Naive thymus-derived CD4-positive, alpha-beta T cell (primary cell): ENCODE measurements at regions of chr6 and their contacts with region 1.

Region 1: GRCh38 chr6:156410649-156411048 is 366.5 kb upstream of the ARID1B start:
- DNase-seq: no peak
- ATAC-seq: no peak
- H3K4me3 ChIP-seq: no peak overlapping the region
- H3K4me3 Mint-ChIP-seq: no peak overlapping the region
- H3K27ac ChIP-seq: no peak overlapping the region
- H3K27ac Mint-ChIP-seq: no peak overlapping the region
- H3K4me1 ChIP-seq: no peaks in the 10 kb centered on the region
- H3K4me1 Mint-ChIP-seq: peaks cover 0 to 2% (median 0%) of the 10 kb centered on the region in 7 donors
- H3K27me3 ChIP-seq: no peaks in the 10 kb centered on the region
- H3K27me3 Mint-ChIP-seq: no peaks in the 10 kb centered on the region

Region 2: DNA sequence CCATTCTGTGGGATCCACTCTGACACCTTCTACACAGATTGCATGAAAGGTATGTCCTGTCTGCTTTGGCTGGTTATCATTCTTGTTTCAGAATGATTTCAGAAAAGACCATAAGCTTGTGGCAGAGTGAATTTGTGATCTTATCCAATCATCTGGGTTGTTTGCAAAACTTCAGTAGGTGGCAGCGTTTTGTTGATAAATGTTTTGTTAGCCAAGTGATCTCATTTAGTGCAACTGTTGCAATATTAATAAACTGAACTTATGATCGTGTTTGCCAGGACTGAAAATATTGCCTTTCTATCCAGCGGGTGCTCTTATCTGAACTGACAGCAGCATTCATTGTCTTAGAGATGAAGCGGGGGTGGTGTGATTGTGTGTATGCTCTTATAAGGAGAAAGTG is 341.8 kb before region 1 on chr6:
- CTCF ChIA-PET with region 1: no interaction called
- POLR2A ChIA-PET with region 1: no interaction called
- intact Hi-C with region 1: loop called in 1 of 2 experiments (anchors 5 kb)
- DNase-seq: peak in 1 of 9 donors; percentile 9
- ATAC-seq: no peak
- H3K4me3 ChIP-seq: no peak overlapping the region
- H3K4me3 Mint-ChIP-seq: no peak overlapping the region
- H3K27ac ChIP-seq: no peak overlapping the region
- H3K27ac Mint-ChIP-seq: peak overlapping the region in 2 of 9 donors; percentile 4 to 5
- H3K4me1 ChIP-seq: no peaks in the 10 kb centered on the region
- H3K4me1 Mint-ChIP-seq: peaks cover 0 to 5% (median 2%) of the 10 kb centered on the region in 7 donors
- H3K27me3 ChIP-seq: no peaks in the 10 kb centered on the region
- H3K27me3 Mint-ChIP-seq: no peaks in the 10 kb centered on the region

Region 3: GRCh38 chr6:156219973-156220372 is 190.7 kb before region 1 on chr6:
- CTCF ChIA-PET with region 1: no interaction called
- POLR2A ChIA-PET with region 1: no interaction called
- intact Hi-C with region 1: no loop called
- DNase-seq: no peak
- ATAC-seq: no peak
- H3K4me3 ChIP-seq: no peak overlapping the region
- H3K4me3 Mint-ChIP-seq: no peak overlapping the region
- H3K27ac ChIP-seq: no peak overlapping the region
- H3K27ac Mint-ChIP-seq: no peak overlapping the region
- H3K4me1 ChIP-seq: no peaks in the 10 kb centered on the region
- H3K4me1 Mint-ChIP-seq: peaks cover 0 to 13% (median 0%) of the 10 kb centered on the region in 7 donors
- H3K27me3 ChIP-seq: no peaks in the 10 kb centered on the region
- H3K27me3 Mint-ChIP-seq: peaks cover 0 to 10% (median 0%) of the 10 kb centered on the region in 5 donors

Region 4: GRCh38 chr6:156250593-156250992 is 160.1 kb before region 1 on chr6:
- CTCF ChIA-PET with region 1: no interaction called
- POLR2A ChIA-PET with region 1: no interaction called
- intact Hi-C with region 1: no loop called
- DNase-seq: no peak
- ATAC-seq: no peak
- H3K4me3 ChIP-seq: no peak overlapping the region
- H3K4me3 Mint-ChIP-seq: peak overlapping the region in 2 of 10 donors; percentile 0 to 1
- H3K27ac ChIP-seq: no peak overlapping the region
- H3K27ac Mint-ChIP-seq: peak overlapping the region in 5 of 9 donors; percentile 1 to 59 (median 19)
- H3K4me1 ChIP-seq: no peaks in the 10 kb centered on the region
- H3K4me1 Mint-ChIP-seq: peaks cover 4 to 28% (median 11%) of the 10 kb centered on the region in 7 donors
- H3K27me3 ChIP-seq: no peaks in the 10 kb centered on the region
- H3K27me3 Mint-ChIP-seq: no peaks in the 10 kb centered on the region

Region 5: DNA sequence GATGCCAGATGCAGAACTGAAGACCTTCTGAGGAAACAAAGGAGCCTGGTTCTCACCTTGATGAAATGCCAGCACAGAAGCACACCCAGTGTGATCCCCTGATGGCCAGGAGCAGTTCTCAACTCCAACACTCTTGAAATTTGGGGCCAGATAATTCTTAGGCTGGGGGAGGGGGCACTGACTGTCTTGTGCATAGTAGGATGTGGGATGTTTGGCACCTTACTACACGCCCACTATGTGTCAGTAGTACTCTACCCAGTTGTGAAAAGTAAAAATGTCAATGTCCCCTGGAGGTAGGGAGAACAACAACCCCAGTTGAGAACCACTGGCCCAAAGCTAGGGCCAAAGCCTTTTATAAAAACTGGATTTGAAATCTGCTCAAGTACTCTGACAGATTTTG is 31.8 kb before region 1 on chr6:
- CTCF ChIA-PET with region 1: no interaction called
- POLR2A ChIA-PET with region 1: interaction called, 6 read pairs
- intact Hi-C with region 1: loop called in 1 of 2 experiments (anchors 1 kb)
- DNase-seq: peak in 6 of 9 donors; percentile 19 to 48 (median 36)
- ATAC-seq: peak; percentile 74
- H3K4me3 ChIP-seq: no peak overlapping the region
- H3K4me3 Mint-ChIP-seq: no peak overlapping the region
- H3K27ac ChIP-seq: no peak overlapping the region
- H3K27ac Mint-ChIP-seq: peak overlapping the region in 6 of 9 donors; percentile 8 to 67 (median 36)
- H3K4me1 ChIP-seq: no peaks in the 10 kb centered on the region
- H3K4me1 Mint-ChIP-seq: peaks cover 0 to 21% (median 0%) of the 10 kb centered on the region in 7 donors
- H3K27me3 ChIP-seq: no peaks in the 10 kb centered on the region
- H3K27me3 Mint-ChIP-seq: peaks cover 0 to 4% (median 0%) of the 10 kb centered on the region in 5 donors